ENCODE measurements at regions of chr19 and their contacts with region 1.

Region 1: DNA sequence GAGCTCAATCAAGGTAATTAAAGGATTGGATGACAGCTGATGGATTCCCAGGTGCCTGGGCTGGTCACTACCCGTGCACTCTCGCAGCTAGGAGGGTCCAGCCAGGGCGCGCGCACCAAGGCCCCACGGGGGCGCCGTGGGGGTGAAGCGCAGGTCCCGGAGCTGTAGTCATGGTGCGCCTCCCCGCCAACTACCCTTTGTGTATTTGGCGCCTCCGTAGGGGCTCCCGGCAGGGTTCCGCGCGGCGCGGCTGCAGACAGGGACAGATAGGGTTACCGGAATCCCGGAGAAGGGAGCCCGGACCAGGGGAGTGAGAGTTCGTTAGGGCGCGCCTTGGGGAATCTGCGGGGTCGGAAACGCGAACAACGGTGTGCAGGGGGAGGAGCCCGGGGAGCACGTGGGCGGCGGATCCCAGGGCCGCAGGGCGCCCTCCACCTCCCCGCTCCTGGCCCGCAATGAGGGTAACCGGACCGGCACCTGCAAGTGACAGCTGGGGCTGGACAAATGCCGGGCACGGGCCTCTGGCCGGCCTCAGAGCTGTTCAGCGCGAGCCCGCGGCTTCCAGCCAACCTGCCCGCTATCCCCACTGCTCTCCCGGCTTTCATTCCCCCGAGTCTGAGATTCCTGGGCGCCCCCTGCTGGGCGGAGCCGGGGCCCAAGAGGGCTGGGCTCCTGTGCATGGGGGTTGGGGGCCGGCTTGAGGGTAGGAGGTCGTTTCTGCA is 3.4 kb upstream of the PRAM1 start:
- DNase-seq: peak; percentile 47 to 73 (median 56)
- H3K4me3 ChIP-seq: peak overlapping the region; percentile 66
- H3K4me3 Mint-ChIP-seq: peak overlapping the region; percentile 61 to 96 (median 87)
- H3K27ac ChIP-seq: peak overlapping the region; percentile 1
- H3K27ac Mint-ChIP-seq: peak overlapping the region; percentile 35 to 94 (median 75)
- H3K4me1 ChIP-seq: peaks cover 13% of the 10 kb centered on the region
- H3K4me1 Mint-ChIP-seq: peaks cover 10 to 19% (median 14%) of the 10 kb centered on the region in 3 donors
- H3K27me3 ChIP-seq: no peaks in the 10 kb centered on the region
- H3K27me3 Mint-ChIP-seq: no peaks in the 10 kb centered on the region

Region 2: GRCh38 chr19:8487137-8487851 is 18.5 kb before region 1 on chr19:
- CTCF ChIA-PET with region 1: interaction called, 11 read pairs
- POLR2A ChIA-PET with region 1: interaction called, 3 read pairs
- DNase-seq: peak; percentile 35 to 71 (median 64)
- H3K4me3 ChIP-seq: no peak overlapping the region
- H3K4me3 Mint-ChIP-seq: peak overlapping the region; percentile 32 to 86 (median 66)
- H3K27ac ChIP-seq: no peak overlapping the region
- H3K27ac Mint-ChIP-seq: peak overlapping the region; percentile 78 to 97 (median 90)
- H3K4me1 ChIP-seq: peaks cover 25% of the 10 kb centered on the region
- H3K4me1 Mint-ChIP-seq: peaks cover 25 to 43% (median 35%) of the 10 kb centered on the region in 3 donors
- H3K27me3 ChIP-seq: no peaks in the 10 kb centered on the region
- H3K27me3 Mint-ChIP-seq: no peaks in the 10 kb centered on the region

Region 3: DNA sequence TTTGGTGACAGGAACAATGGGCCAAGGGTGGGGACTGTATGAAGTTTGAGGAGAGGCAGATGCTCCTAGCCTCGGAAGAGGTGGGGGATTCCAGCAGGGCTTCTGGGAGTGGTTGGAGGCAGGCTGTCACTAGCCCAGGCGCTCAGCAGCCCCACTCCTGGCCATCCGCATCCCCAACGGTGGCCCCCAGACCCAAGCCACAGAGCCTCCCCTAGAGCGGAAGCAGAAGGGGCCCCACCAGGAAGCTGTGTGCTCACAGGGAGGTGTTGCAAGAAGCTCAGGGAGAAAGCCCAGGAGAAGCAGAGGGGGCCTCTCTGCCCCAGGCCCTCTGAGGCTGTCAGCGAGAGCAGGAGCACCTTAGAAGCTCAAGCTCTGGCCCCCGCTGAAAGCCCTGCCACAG is 11.7 kb before region 1 on chr19:
- CTCF ChIA-PET with region 1: interaction called, 16 read pairs
- POLR2A ChIA-PET with region 1: interaction called, 3 read pairs
- DNase-seq: no peak
- H3K4me3 ChIP-seq: no peak overlapping the region
- H3K4me3 Mint-ChIP-seq: peak overlapping the region in 1 of 7 donors; percentile 32
- H3K27ac ChIP-seq: no peak overlapping the region
- H3K27ac Mint-ChIP-seq: peak overlapping the region in 5 of 8 donors; percentile 5 to 81 (median 61)
- H3K4me1 ChIP-seq: peaks cover 8% of the 10 kb centered on the region
- H3K4me1 Mint-ChIP-seq: peaks cover 4 to 26% (median 6%) of the 10 kb centered on the region in 3 donors
- H3K27me3 ChIP-seq: no peaks in the 10 kb centered on the region
- H3K27me3 Mint-ChIP-seq: no peaks in the 10 kb centered on the region